Left ventricle myocardium superior (tissue), 1 donor: ENCODE measurements at regions of chr10 and their contacts with region 1.

Region 1: GRCh38 chr10:71708301-71708703 is 11.3 kb downstream of the C10orf105 start:
- DNase-seq: peak; percentile 81
- ATAC-seq: peak; percentile 49

Region 2: GRCh38 chr10:71383972-71384687 is 324.2 kb before region 1 on chr10:
- intact Hi-C with region 1: loop called (anchors 10 kb)
- DNase-seq: peak; percentile 85
- ATAC-seq: peak; percentile 90